ENCODE measurements at regions of chr7 and their contacts with region 1.

Region 1: GRCh38 chr7:106112117-106112971 is at the start of gene SYPL1:
- DNase-seq: peak; percentile 91 to 93 (median 92)
- H3K4me3 ChIP-seq: peak within 1 kb of the TSS; percentile 60 to 76
- H3K4me3 Mint-ChIP-seq: peak within 1 kb of the TSS; percentile 88 to 96 (median 92)
- H3K27ac ChIP-seq: peak within 1 kb of the TSS; percentile 69
- H3K27ac Mint-ChIP-seq: peak within 1 kb of the TSS; percentile 84 to 98 (median 97)
- H3K4me1 ChIP-seq: peaks cover 52% of the 10 kb centered on the region
- H3K4me1 Mint-ChIP-seq: peaks cover 53 to 75% (median 65%) of the 10 kb centered on the region in 4 donors
- H3K27me3 ChIP-seq: no peaks in the 10 kb centered on the region
- H3K27me3 Mint-ChIP-seq: no peaks in the 10 kb centered on the region
- total RNA-seq, gene SYPL1: 46.9 to 47.9 TPM

Region 2: DNA sequence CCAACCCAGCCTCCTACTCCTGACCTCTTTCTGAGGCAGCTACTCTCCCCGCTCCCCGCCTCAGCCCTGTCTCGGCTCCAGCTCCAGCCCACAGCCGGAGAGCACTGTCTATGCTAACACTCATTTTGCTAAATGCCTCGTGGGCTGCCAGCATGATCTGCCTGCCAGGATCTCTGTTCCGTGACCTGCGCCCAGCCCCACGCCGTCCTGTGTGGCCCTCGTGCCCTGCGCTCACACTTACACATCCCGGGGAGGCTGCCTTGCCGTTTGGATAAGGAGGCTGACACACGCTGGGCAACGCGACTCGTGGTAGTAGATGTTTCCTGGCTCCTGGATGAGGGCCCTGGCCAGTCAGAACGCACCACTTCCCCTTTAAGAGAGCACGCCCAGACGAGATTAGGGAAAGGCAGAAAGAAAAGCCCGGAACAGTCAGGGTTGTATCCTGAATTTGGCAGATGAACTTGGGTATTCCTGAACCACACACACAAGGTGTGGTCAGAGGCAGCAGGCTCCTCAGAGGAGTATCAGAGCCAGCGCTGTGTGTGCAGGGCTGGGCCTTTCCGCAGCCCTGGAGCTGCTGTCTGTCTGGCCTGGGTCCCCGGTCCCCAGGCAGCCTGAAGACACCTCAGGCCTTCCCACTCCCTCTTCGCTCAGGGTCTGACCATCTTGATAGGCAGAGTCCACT is 433.4 kb before region 1 on chr7:
- CTCF ChIA-PET with region 1: no interaction called
- POLR2A ChIA-PET with region 1: no interaction called
- intact Hi-C with region 1: loop called (anchors 5 kb)
- DNase-seq: peak in 2 of 5 donors; percentile 17 to 27
- H3K4me3 ChIP-seq: peak overlapping the region; percentile 12 to 27
- H3K4me3 Mint-ChIP-seq: peak overlapping the region; percentile 86 to 95 (median 92)
- H3K27ac ChIP-seq: peak overlapping the region; percentile 83
- H3K27ac Mint-ChIP-seq: peak overlapping the region; percentile 90 to 99 (median 96)
- H3K4me1 ChIP-seq: peaks cover 63% of the 10 kb centered on the region
- H3K4me1 Mint-ChIP-seq: peaks cover 61 to 94% (median 74%) of the 10 kb centered on the region in 4 donors
- H3K27me3 ChIP-seq: no peaks in the 10 kb centered on the region
- H3K27me3 Mint-ChIP-seq: no peaks in the 10 kb centered on the region

Region 3: GRCh38 chr7:105975770-105976422 is 136.4 kb before region 1 on chr7:
- CTCF ChIA-PET with region 1: no interaction called
- POLR2A ChIA-PET with region 1: no interaction called
- intact Hi-C with region 1: no loop called
- DNase-seq: no peak
- H3K4me3 ChIP-seq: no peak overlapping the region
- H3K4me3 Mint-ChIP-seq: no peak overlapping the region
- H3K27ac ChIP-seq: no peak overlapping the region
- H3K27ac Mint-ChIP-seq: no peak overlapping the region
- H3K4me1 ChIP-seq: no peaks in the 10 kb centered on the region
- H3K4me1 Mint-ChIP-seq: no peaks in the 10 kb centered on the region
- H3K27me3 ChIP-seq: no peaks in the 10 kb centered on the region
- H3K27me3 Mint-ChIP-seq: no peaks in the 10 kb centered on the region

Region 4: DNA sequence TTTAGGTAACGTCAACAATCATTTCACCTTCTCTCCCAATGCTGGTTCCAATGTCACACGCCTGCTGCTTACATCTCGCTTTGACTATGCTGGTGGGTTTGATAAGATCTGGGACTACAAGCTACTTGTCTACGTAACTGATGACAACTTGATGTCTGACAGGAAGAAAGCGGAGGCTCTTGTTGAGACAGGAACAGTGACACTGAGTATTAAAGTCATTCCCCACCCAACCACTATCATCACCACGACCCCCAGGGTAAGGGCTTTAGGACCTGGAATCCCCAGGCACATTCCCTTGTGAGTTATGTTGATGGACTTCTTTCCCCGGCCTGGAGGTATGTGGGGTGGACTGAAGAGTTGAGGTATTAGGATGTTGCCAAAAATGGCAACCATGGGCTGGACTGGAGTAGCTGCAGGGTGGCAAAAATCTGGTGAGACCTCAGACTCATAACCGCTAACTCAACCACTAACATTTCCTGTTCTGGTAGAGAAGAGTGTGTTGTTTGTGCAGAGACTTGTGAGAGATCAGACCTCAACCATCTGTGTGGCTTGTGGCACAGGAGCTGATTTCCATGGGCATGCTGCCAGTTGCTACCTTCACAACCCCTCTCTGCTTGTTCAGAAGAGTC is 90.0 kb before region 1 on chr7:
- CTCF ChIA-PET with region 1: no interaction called
- POLR2A ChIA-PET with region 1: interaction called, 24 read pairs
- intact Hi-C with region 1: loop called (anchors 1 kb)
- DNase-seq: peak; percentile 89 to 92 (median 91)
- H3K4me3 ChIP-seq: peak overlapping the region in 1 of 2 donors; percentile 48
- H3K4me3 Mint-ChIP-seq: peak overlapping the region; percentile 5 to 82 (median 72)
- H3K27ac ChIP-seq: peak overlapping the region; percentile 48
- H3K27ac Mint-ChIP-seq: peak overlapping the region; percentile 88 to 99 (median 98)
- H3K4me1 ChIP-seq: peaks cover 52% of the 10 kb centered on the region
- H3K4me1 Mint-ChIP-seq: peaks cover 38 to 70% (median 48%) of the 10 kb centered on the region in 4 donors
- H3K27me3 ChIP-seq: no peaks in the 10 kb centered on the region
- H3K27me3 Mint-ChIP-seq: no peaks in the 10 kb centered on the region

Region 5: DNA sequence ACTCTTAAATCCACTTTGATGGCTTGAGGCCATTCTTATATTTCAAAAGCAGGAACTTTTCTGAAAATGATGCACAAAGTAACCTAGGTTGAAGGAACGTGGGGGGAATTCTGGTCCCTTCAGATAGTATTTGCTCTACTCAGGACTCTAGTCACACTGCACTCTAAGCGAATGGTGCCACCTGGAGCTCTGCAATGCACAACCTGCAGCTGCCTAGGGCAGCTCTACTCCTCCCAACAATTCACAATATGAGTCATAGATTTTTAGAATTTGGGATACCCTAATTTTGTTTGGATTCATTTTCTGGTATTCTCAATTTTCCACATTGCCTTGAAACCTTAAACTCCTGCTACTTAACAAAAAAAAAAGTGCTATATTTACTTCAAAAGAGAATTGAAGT is 17.5 kb before region 1 on chr7:
- CTCF ChIA-PET with region 1: interaction called, 3 read pairs
- POLR2A ChIA-PET with region 1: interaction called, 14 read pairs
- intact Hi-C with region 1: no loop called
- DNase-seq: no peak
- H3K4me3 ChIP-seq: no peak overlapping the region
- H3K4me3 Mint-ChIP-seq: no peak overlapping the region
- H3K27ac ChIP-seq: no peak overlapping the region
- H3K27ac Mint-ChIP-seq: no peak overlapping the region
- H3K4me1 ChIP-seq: peaks cover 3% of the 10 kb centered on the region
- H3K4me1 Mint-ChIP-seq: peaks cover 9 to 12% (median 11%) of the 10 kb centered on the region in 4 donors
- H3K27me3 ChIP-seq: no peaks in the 10 kb centered on the region
- H3K27me3 Mint-ChIP-seq: no peaks in the 10 kb centered on the region

Region 6: GRCh38 chr7:106139265-106140251 is 27.2 kb after region 1 on chr7:
- CTCF ChIA-PET with region 1: no interaction called
- POLR2A ChIA-PET with region 1: no interaction called
- intact Hi-C with region 1: no loop called
- DNase-seq: no peak
- H3K4me3 ChIP-seq: no peak overlapping the region
- H3K4me3 Mint-ChIP-seq: no peak overlapping the region
- H3K27ac ChIP-seq: no peak overlapping the region
- H3K27ac Mint-ChIP-seq: no peak overlapping the region
- H3K4me1 ChIP-seq: no peaks in the 10 kb centered on the region
- H3K4me1 Mint-ChIP-seq: no peaks in the 10 kb centered on the region
- H3K27me3 ChIP-seq: no peaks in the 10 kb centered on the region
- H3K27me3 Mint-ChIP-seq: peaks cover 0 to 2% of the 10 kb centered on the region in 2 donors

Region 7: GRCh38 chr7:106153891-106154449 is 41.6 kb after region 1 on chr7:
- CTCF ChIA-PET with region 1: interaction called, 9 read pairs
- POLR2A ChIA-PET with region 1: interaction called, 5 read pairs
- intact Hi-C with region 1: loop called (anchors 2 kb)
- DNase-seq: peak; percentile 59 to 74 (median 65)
- H3K4me3 ChIP-seq: no peak overlapping the region
- H3K4me3 Mint-ChIP-seq: no peak overlapping the region
- H3K27ac ChIP-seq: no peak overlapping the region
- H3K27ac Mint-ChIP-seq: peak overlapping the region in 1 of 7 donors; percentile 80
- H3K4me1 ChIP-seq: no peaks in the 10 kb centered on the region
- H3K4me1 Mint-ChIP-seq: peaks cover 0 to 9% (median 3%) of the 10 kb centered on the region in 4 donors
- H3K27me3 ChIP-seq: peaks cover 3% of the 10 kb centered on the region
- H3K27me3 Mint-ChIP-seq: peaks cover 11 to 19% of the 10 kb centered on the region in 2 donors

Region 8: DNA sequence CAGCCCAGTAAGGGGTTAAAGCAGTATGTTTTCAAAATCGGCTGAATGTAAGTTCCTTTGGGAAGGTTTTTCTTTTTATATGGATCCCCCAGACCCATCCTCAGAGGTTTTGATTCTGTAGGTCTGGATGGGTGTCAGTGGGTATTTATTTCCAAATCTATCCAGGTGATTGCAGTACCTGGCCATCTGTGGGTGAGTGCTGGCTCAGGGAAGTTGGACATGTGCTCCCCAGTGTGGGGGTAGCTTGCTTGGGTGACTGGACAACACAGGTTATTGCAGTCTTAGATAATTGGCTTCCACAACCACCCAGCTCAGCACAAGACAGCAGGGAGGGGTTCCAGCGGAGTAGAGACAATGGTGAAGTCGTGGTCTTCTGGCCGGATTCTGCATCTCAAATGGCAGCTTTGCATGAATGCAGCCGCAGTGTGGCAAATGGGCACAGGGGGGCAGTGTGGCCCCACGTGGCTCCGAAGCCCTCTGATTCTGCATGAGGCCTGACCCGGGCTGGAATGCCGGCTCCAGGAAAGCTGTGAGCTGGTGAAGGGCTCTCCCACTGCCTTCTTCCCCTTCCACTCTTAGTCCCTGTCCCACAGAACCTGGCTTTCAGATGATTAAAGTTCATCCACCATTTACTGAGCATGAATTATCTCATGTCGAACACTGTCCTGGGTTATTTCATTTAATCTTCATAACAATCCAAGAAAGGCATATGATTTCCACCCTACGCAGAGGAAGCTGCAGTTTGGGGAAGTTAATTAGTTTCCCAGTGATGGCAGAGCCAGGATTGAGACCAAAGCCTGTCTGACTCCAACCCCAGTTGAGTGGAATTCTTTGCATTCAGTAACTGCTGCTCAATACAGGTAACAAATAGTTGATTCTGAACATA is 64.3 kb after region 1 on chr7:
- CTCF ChIA-PET with region 1: no interaction called
- POLR2A ChIA-PET with region 1: no interaction called
- intact Hi-C with region 1: no loop called
- DNase-seq: peak; percentile 46 to 58 (median 51)
- H3K4me3 ChIP-seq: no peak overlapping the region
- H3K4me3 Mint-ChIP-seq: no peak overlapping the region
- H3K27ac ChIP-seq: no peak overlapping the region
- H3K27ac Mint-ChIP-seq: peak overlapping the region in 1 of 7 donors; percentile 14
- H3K4me1 ChIP-seq: no peaks in the 10 kb centered on the region
- H3K4me1 Mint-ChIP-seq: peaks cover 0 to 4% (median 3%) of the 10 kb centered on the region in 4 donors
- H3K27me3 ChIP-seq: no peaks in the 10 kb centered on the region
- H3K27me3 Mint-ChIP-seq: peaks cover 3 to 10% of the 10 kb centered on the region in 2 donors

Region 9: DNA sequence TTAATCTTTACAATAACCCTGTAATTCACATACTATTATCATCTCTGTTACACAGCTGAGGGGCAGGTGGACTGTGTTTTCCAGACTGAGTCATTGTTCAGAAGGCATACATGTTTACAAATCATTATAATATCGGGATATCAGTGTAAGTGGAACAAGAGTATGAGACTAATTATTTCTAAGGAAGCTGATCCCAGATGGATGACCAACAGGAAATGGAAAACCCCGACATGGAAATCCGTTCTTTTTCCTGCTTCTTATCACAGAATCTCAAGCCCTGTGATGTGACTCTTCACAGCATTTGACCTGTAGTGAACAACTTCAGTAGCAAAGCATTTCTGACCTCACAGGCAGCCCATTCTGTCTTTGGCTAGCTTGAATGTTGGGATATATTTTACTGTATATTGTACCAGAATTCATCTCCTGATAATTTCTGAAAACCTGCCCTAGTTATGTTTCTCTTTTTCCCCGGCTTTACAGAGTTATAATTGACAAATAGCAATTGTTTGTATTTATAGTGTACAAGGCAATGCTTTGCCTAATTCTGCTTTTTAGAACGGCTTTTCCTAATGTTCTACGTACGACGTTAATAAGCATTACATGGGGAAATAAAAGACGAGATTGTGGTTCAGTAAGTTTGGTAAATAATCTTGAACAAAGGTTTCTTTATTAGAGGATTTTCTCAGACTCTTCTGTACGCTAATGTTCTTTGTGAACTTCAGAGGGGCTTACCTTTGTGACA is 78.4 kb after region 1 on chr7:
- CTCF ChIA-PET with region 1: no interaction called
- POLR2A ChIA-PET with region 1: no interaction called
- intact Hi-C with region 1: no loop called
- DNase-seq: no peak
- H3K4me3 ChIP-seq: no peak overlapping the region
- H3K4me3 Mint-ChIP-seq: no peak overlapping the region
- H3K27ac ChIP-seq: no peak overlapping the region
- H3K27ac Mint-ChIP-seq: no peak overlapping the region
- H3K4me1 ChIP-seq: no peaks in the 10 kb centered on the region
- H3K4me1 Mint-ChIP-seq: no peaks in the 10 kb centered on the region
- H3K27me3 ChIP-seq: no peaks in the 10 kb centered on the region
- H3K27me3 Mint-ChIP-seq: peaks cover 17 to 28% of the 10 kb centered on the region in 2 donors